ENCODE measurements at regions of chr3 and their contacts with region 1.

Region 1: DNA sequence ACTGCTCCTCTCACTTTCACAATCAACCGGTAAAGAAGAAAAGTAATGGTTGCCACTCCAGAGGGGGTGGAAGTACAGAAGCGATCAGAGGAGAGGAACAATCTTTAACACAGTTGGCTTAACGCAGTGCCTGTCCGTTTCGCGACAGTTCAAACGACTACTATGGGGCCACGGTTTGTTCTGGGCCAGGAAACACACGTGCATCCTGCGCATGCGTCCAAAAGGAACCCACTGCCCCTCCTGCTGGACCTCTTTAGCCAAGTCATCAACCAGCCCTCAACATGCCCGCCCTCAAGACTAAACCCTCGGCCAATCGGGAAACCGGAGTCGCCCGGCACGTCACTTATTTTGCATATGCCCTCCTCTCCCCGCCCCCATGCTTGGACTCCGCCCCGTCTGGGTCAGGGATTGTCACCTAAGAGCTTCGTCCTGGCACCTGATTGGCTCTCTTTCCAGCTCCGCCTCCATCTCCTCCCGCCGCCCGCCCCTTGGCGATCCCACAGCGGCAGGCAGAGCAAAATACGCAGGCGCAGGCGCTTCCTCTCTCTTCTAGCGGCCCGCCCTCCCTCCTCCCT is 345 bp upstream of the CDV3 start:
- DNase-seq: peak; percentile 100
- ATAC-seq: peak; percentile 88
- H3K4me3 ChIP-seq: peak overlapping the region; percentile 54 to 61
- H3K27ac ChIP-seq: peak overlapping the region; percentile 96
- H3K4me1 ChIP-seq: peaks cover 35 to 65% of the 10 kb centered on the region in 2 experiments
- H3K27me3 ChIP-seq: no peaks in the 10 kb centered on the region
- CTCF ChIP-seq: no peak
- POLR2A ChIP-seq: peak; percentile 93
- RAD21 ChIP-seq: no peak

Region 2: DNA sequence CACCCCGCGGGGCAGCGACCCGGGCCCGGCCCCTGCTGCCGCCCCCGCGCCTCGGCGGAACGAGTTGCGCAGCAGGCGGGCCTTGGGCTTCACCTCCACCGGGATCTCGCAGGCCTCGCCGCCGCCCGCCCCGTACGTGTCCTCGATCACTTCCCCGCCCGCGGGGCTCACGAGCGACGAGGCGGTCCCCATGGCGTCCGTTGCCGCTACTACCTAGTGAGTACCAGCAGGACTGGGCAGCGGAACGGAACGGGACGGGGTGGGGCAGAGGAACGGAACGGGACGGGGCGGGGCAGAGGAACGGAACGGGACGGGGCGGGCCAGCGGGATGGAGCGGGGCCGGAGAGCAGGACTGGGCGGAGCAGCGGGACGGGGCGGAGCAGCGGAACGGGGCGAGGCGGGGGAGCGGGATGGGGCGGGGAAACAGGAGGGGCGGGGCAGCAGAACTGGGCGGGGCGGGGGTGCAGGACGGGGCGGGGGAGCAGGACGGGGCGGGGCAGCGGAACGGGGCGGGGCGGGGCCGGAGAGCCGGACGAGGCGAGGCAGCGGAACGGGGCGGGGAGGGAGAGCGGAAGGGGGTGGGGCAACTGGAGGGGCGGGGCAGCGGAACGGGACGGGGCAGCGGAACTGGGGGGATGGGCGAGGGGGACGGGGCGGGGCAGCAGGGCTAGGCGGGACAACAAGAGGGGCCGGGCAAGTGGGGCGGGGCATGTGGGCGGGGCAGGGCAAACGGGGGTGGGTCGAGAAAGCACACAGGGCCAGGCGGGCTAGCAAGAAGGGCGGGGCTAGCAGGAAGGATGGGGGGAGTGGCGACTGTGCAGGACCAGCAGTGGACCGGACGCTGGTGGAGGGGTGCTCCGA is 850.7 kb before region 1 on chr3 and contains the start of gene NPHP3:
- CTCF ChIA-PET with region 1: no interaction called
- POLR2A ChIA-PET with region 1: no interaction called
- RAD21 ChIA-PET with region 1: no interaction called
- intact Hi-C with region 1: loop called (anchors 5 kb)
- DNase-seq: peak; percentile 86
- ATAC-seq: peak; percentile 89
- H3K4me3 ChIP-seq: peak within 1 kb of the TSS; percentile 78 to 79
- H3K27ac ChIP-seq: peak within 1 kb of the TSS; percentile 59
- H3K4me1 ChIP-seq: peaks cover 7 to 21% of the 10 kb centered on the region in 2 experiments; a peak in 3 of 4 replicates
- H3K27me3 ChIP-seq: no peaks in the 10 kb centered on the region
- CTCF ChIP-seq: 0 out of 6 replicates have a peak, but pooled peaks of 1 of the 3 experiments have one; percentile 3
- POLR2A ChIP-seq: peak; percentile 52
- RAD21 ChIP-seq: no peak
- total RNA-seq, gene NPHP3: 15.5 TPM

Region 3: GRCh38 chr3:133464573-133464972 is 108.6 kb before region 1 on chr3:
- CTCF ChIA-PET with region 1: interaction called, 12 read pairs
- POLR2A ChIA-PET with region 1: interaction called, 3 read pairs
- RAD21 ChIA-PET with region 1: interaction called in 1 of 2 experiments, 3 read pairs
- intact Hi-C with region 1: loop called (anchors 1 kb)
- DNase-seq: no peak
- ATAC-seq: peak; percentile 85
- H3K4me3 ChIP-seq: no peak overlapping the region
- H3K27ac ChIP-seq: no peak overlapping the region
- H3K4me1 ChIP-seq: no peaks in the 10 kb centered on the region
- H3K27me3 ChIP-seq: no peaks in the 10 kb centered on the region
- CTCF ChIP-seq: peak; percentile 34 to 48 (median 42); a peak in 4 of 6 replicates
- POLR2A ChIP-seq: no peak
- RAD21 ChIP-seq: peak; percentile 58

Region 4: GRCh38 chr3:133540896-133541674 is 32.1 kb before region 1 on chr3:
- CTCF ChIA-PET with region 1: interaction called, 3 read pairs
- POLR2A ChIA-PET with region 1: interaction called, 12 read pairs
- RAD21 ChIA-PET with region 1: no interaction called
- intact Hi-C with region 1: no loop called
- DNase-seq: peak; percentile 56
- ATAC-seq: peak; percentile 81
- H3K4me3 ChIP-seq: peak overlapping the region in 1 of 2 experiments; percentile 11; a peak in 2 of 4 replicates
- H3K27ac ChIP-seq: no peak overlapping the region
- H3K4me1 ChIP-seq: peaks cover 6 to 19% of the 10 kb centered on the region in 2 experiments; a peak in 3 of 4 replicates
- H3K27me3 ChIP-seq: no peaks in the 10 kb centered on the region
- CTCF ChIP-seq: no peak
- POLR2A ChIP-seq: no peak
- RAD21 ChIP-seq: no peak